ENCODE measurements at regions of chr11 and their contacts with region 1.

Region 1: GRCh38 chr11:47454180-47454644 is 5.3 kb upstream of the RAPSN start:
- DNase-seq: peak; percentile 67 to 86
- ATAC-seq: peak; percentile 94 to 96
- H3K4me3 ChIP-seq: no peak overlapping the region
- H3K27ac ChIP-seq: no peak overlapping the region
- H3K4me1 ChIP-seq: no peaks in the 10 kb centered on the region
- CTCF ChIP-seq: peak; percentile 73
- EP300 ChIP-seq: no peak
- POLR2A ChIP-seq: no peak
- RAD21 ChIP-seq: peak; percentile 67 to 74

Region 2: DNA sequence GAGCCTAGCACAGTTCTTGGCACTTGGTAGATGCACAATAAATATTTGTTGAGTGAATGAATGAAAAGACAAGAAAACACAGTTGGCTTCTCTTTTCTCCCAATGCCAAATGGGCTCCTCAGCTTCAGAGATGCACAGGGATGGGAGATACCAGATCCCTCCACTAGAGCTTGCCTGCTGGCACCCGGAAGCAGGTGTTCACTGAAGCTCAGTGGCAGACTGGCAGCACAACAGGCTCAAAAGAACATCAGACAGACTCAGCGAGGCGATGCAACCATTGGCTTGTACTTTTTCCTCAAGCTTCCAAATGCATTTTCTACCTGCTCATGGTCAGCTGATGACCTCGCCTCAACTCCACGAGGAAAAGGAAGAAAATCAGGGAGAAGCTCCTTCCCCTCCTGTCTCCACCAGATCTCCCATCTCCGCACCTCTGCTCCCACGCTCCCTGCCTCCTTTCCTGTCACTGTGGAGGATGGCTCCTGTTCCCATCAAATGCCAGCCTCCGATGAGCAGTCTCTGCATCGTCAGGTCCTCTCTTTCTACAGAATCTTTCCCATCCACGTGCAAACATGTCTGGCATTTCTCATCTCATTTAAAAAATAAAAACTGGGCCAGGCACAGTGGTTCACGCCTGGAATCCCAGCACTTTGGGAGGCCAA is 11.0 kb before region 1 on chr11:
- CTCF ChIA-PET with region 1: interaction called, 19 read pairs
- POLR2A ChIA-PET with region 1: no interaction called
- DNase-seq: peak; percentile 43 to 46
- ATAC-seq: peak; percentile 82 to 89
- H3K4me3 ChIP-seq: no peak overlapping the region
- H3K27ac ChIP-seq: no peak overlapping the region
- H3K4me1 ChIP-seq: no peaks in the 10 kb centered on the region
- CTCF ChIP-seq: no peak
- EP300 ChIP-seq: no peak
- POLR2A ChIP-seq: no peak
- RAD21 ChIP-seq: no peak

Region 3: DNA sequence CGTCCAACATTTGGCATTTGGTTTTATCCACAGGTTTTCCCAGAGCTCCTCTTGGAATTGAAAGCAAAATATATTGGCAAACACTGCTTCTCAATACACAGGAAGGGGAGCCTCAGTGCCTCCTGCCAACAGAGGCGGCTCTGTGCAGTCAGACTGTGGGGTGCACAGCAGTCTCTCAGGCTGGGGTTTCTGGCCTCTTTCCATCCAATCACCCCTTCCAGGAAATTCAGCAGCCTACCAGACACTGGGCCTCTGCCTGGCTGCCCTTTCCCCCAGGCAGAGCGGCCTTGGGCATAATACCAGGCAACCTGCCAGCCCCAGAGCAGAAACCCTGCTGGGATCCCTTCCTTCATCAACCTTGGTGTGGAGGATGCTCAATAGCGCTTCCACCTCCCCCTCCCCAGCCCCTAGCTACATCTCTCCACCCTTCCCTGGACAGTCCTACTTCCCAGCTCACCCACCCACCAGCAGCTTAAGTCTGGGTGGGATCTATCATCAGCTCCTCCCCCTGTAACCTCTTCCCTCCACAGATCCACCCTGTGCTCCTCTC is 12.6 kb after region 1 on chr11:
- CTCF ChIA-PET with region 1: interaction called, 48 read pairs
- POLR2A ChIA-PET with region 1: no interaction called
- DNase-seq: no peak
- ATAC-seq: peak in 1 of 2 experiments; percentile 41; a peak in 3 of 6 replicates
- H3K4me3 ChIP-seq: no peak overlapping the region
- H3K27ac ChIP-seq: peak overlapping the region in 1 of 2 experiments; percentile 58; a peak in 2 of 6 replicates
- H3K4me1 ChIP-seq: peaks cover 12% of the 10 kb centered on the region
- CTCF ChIP-seq: no peak
- EP300 ChIP-seq: no peak
- POLR2A ChIP-seq: no peak
- RAD21 ChIP-seq: no peak

Measured in A549 (cell line).